T-cell (primary cell): ENCODE measurements at regions of chr7 and their contacts with region 1.

Region 1: GRCh38 chr7:127347567-127348246 is 44.8 kb downstream of the ZNF800 start:
- DNase-seq: peak; percentile 45 to 86 (median 67)
- ATAC-seq: peak; percentile 98 to 99 (median 98)
- H3K4me3 ChIP-seq: peak overlapping the region; percentile 29 to 62
- H3K4me3 Mint-ChIP-seq: peak overlapping the region; percentile 43 to 79 (median 72)
- H3K27ac ChIP-seq: no peak overlapping the region
- H3K27ac Mint-ChIP-seq: peak overlapping the region in 1 of 2 donors; percentile 39
- H3K4me1 ChIP-seq: peaks cover 0 to 9% of the 10 kb centered on the region in 2 experiments
- H3K4me1 Mint-ChIP-seq: peaks cover 20 to 28% (median 27%) of the 10 kb centered on the region in 3 donors
- H3K27me3 ChIP-seq: no peaks in the 10 kb centered on the region
- H3K27me3 Mint-ChIP-seq: no peaks in the 10 kb centered on the region

Region 2: GRCh38 chr7:127447326-127447945 is 99.7 kb after region 1 on chr7:
- CTCF ChIA-PET with region 1: interaction called, 7 to 22 read pairs
- POLR2A ChIA-PET with region 1: interaction called in 1 of 2 experiments, 8 read pairs
- DNase-seq: peak in 34 of 35 experiments; percentile 13 to 77 (median 38)
- ATAC-seq: peak; percentile 80 to 95 (median 88)
- H3K4me3 ChIP-seq: no peak overlapping the region
- H3K4me3 Mint-ChIP-seq: no peak overlapping the region
- H3K27ac ChIP-seq: no peak overlapping the region
- H3K27ac Mint-ChIP-seq: peak overlapping the region; percentile 59 to 68
- H3K4me1 ChIP-seq: peaks cover 0 to 13% of the 10 kb centered on the region in 2 experiments
- H3K4me1 Mint-ChIP-seq: peaks cover 21 to 31% (median 30%) of the 10 kb centered on the region in 3 donors
- H3K27me3 ChIP-seq: peaks cover 2 to 17% of the 10 kb centered on the region in 2 experiments
- H3K27me3 Mint-ChIP-seq: peaks cover 5 to 17% of the 10 kb centered on the region in 2 donors

Region 3: GRCh38 chr7:127514499-127514898 is 166.8 kb after region 1 on chr7:
- CTCF ChIA-PET with region 1: interaction called, 6 to 11 read pairs
- POLR2A ChIA-PET with region 1: no interaction called
- DNase-seq: peak in 7 of 35 experiments; percentile 1 to 71 (median 7)
- ATAC-seq: peak; percentile 63 to 81 (median 70)
- H3K4me3 ChIP-seq: no peak overlapping the region
- H3K4me3 Mint-ChIP-seq: no peak overlapping the region
- H3K27ac ChIP-seq: no peak overlapping the region
- H3K27ac Mint-ChIP-seq: no peak overlapping the region
- H3K4me1 ChIP-seq: no peaks in the 10 kb centered on the region
- H3K4me1 Mint-ChIP-seq: no peaks in the 10 kb centered on the region
- H3K27me3 ChIP-seq: peaks cover 2 to 8% of the 10 kb centered on the region in 2 experiments
- H3K27me3 Mint-ChIP-seq: peaks cover 27 to 30% of the 10 kb centered on the region in 2 donors